Activated naive CD4-positive, alpha-beta T cell treated with anti-CD3 and anti-CD28 coated beads, Interleukin-2, amount 10 ng/mL, durations not matched to agents 7 days and 5 days (primary cell): ENCODE measurements at regions of chr12 and their contacts with region 1.

Region 1: DNA sequence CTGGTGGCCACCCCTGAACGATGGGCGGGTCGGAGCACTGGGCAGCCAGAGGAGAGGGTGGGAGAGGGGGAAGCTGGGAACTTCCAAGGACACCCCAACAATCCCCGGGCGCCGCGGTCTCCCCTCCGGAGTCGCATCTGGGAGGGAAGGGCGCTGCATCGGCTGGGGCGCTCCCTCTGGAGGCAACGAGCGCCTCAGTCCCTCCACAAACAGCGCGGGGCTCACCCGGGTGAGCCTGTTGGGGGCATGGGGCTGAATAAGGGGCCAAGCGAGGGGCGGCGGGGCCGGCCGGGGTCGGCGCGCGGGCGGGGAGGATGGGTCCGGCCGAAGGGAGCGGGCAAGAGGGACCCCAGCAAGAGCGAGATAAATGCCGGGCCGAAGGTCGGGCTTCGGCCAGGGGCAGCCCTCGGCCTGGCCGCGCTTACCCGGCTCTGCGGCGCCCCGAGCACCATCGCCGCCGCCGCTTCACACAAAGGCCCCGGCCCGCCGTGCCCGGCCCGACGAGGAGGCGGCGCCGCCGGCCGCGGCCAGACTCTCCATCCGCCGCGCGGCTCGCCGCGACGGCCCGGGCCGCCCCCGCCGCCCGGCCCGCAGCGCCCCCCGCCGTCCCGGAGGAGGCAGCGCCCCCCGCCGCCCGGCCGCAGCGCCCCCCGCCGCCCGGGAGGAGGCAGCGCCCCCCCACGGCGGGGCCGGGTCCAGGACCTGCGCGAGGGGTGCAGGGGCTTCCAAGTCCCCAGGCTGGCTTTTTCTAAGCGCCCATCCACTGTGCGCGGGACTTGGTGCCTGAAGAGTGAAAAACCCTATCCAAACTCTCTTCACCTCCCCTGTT is at the start of gene ZBTB39:
- DNase-seq: peak; percentile 64
- H3K4me3 Mint-ChIP-seq: peak within 1 kb of the TSS; percentile 90
- H3K27ac Mint-ChIP-seq: peak within 1 kb of the TSS; percentile 79
- H3K4me1 Mint-ChIP-seq: peaks cover 62% of the 10 kb centered on the region
- H3K27me3 Mint-ChIP-seq: no peaks in the 10 kb centered on the region

Region 2: DNA sequence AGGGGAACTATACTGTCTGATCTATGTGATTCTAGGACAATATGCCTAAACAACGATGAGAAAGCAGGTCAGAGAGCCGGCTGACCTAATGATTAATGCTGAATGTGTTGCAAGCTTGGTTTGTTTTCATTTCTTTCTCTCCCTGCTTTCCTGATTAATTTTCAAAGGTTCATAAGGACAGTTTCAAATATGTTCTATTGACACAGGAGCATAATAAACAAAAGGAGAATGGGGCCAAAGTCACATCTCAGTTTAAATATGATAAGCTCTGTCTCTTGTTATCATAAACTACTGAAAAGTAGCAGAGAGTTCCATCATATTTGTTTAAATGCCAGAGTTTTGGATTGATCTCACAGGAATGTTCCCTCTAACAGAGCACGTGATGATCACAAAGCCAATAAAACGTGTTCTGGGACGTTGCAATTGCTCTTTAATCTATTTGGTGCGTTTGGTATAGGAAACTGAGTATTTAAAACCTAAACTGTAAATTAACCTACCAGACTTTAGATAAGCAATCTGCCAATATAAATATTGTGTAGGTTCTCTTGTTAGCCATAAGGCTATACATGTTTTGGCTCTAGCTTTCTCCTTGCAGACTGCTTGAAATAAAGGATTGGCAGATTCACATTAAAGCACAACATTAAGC is 246.8 kb before region 1 on chr12:
- CTCF ChIA-PET with region 1: interaction called, 57 read pairs
- DNase-seq: no peak
- H3K4me3 Mint-ChIP-seq: no peak overlapping the region
- H3K27ac Mint-ChIP-seq: no peak overlapping the region
- H3K4me1 Mint-ChIP-seq: peaks cover 12% of the 10 kb centered on the region
- H3K27me3 Mint-ChIP-seq: peaks cover 4% of the 10 kb centered on the region

Region 3: GRCh38 chr12:56839915-56840325 is 166.3 kb before region 1 on chr12:
- CTCF ChIA-PET with region 1: interaction called, 13 read pairs
- DNase-seq: peak; percentile 54
- H3K4me3 Mint-ChIP-seq: no peak overlapping the region
- H3K27ac Mint-ChIP-seq: no peak overlapping the region
- H3K4me1 Mint-ChIP-seq: peaks cover 18% of the 10 kb centered on the region
- H3K27me3 Mint-ChIP-seq: peaks cover 15% of the 10 kb centered on the region

Region 4: GRCh38 chr12:57031138-57031725 is 25.0 kb after region 1 on chr12:
- CTCF ChIA-PET with region 1: interaction called, 17 read pairs
- DNase-seq: peak; percentile 37
- H3K4me3 Mint-ChIP-seq: no peak overlapping the region
- H3K27ac Mint-ChIP-seq: peak overlapping the region; percentile 47
- H3K4me1 Mint-ChIP-seq: peaks cover 38% of the 10 kb centered on the region
- H3K27me3 Mint-ChIP-seq: peaks cover 4% of the 10 kb centered on the region

Region 5: GRCh38 chr12:57069523-57069922 is 63.3 kb after region 1 on chr12:
- CTCF ChIA-PET with region 1: interaction called, 147 read pairs
- DNase-seq: peak; percentile 74
- H3K4me3 Mint-ChIP-seq: no peak overlapping the region
- H3K27ac Mint-ChIP-seq: peak overlapping the region; percentile 88
- H3K4me1 Mint-ChIP-seq: peaks cover 49% of the 10 kb centered on the region
- H3K27me3 Mint-ChIP-seq: no peaks in the 10 kb centered on the region

Region 6: GRCh38 chr12:57111031-57111734 is 105.0 kb after region 1 on chr12 and contains the start of gene STAT6:
- CTCF ChIA-PET with region 1: interaction called, 61 read pairs
- DNase-seq: peak; percentile 94
- H3K4me3 Mint-ChIP-seq: peak within 1 kb of the TSS; percentile 82
- H3K27ac Mint-ChIP-seq: peak within 1 kb of the TSS; percentile 94
- H3K4me1 Mint-ChIP-seq: peaks cover 50% of the 10 kb centered on the region
- H3K27me3 Mint-ChIP-seq: peaks cover 5% of the 10 kb centered on the region